Body of pancreas (tissue), 4 donors: ENCODE measurements at regions of chr5 and their contacts with region 1.

Region 1: GRCh38 chr5:10621832-10622231 is 58.0 kb downstream of the ANKRD33B start:
- DNase-seq: no peak
- ATAC-seq: no peak
- H3K4me3 ChIP-seq: no peak overlapping the region
- H3K27ac ChIP-seq: no peak overlapping the region
- H3K4me1 ChIP-seq: no peaks in the 10 kb centered on the region
- H3K27me3 ChIP-seq: no peaks in the 10 kb centered on the region
- CTCF ChIP-seq: no peak
- POLR2A ChIP-seq: no peak

Region 2: DNA sequence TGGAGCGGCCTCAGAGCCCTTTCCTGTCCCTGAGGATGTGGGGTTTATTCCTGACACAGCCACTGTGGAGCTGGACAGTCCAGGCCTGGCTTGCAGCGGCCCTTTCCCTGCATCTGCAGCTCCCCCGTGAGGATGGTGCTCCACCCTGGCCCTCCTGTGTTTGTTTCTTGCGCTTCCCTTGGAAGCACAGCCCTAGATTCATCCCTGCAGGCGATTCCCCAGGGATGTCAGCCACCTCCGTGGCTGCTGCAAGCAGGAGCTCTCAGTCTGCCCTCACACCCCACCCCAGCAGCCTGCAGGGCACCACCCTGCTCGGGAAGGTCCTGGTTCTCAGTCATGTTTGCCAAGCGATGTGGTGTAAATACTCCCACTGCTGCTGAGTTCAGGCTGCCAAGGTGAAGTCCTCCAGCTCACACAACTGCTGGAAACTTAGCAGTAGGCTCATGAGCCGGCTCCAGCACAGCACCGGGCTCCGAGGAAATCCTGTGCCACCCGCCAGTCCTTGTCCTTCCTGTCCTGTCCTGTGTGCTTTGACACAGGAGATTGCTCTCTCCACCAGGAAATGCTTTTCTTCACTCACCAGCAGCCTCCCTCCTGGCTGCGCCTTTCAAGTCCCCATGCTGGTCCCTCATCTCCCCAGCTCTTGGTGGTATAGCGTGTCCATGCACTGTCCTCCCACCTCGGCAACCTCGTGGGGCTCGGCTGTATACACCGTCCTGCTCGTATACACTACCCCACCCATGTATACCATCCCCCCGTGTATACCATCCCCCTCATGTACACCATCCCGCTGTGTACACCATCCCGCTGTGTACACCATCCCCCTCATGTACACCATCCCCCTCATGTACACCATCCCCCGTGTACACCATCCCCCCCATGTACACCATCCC is 163.9 kb before region 1 on chr5:
- intact Hi-C with region 1: loop called (anchors 5 kb)
- DNase-seq: no peak
- ATAC-seq: no peak
- H3K4me3 ChIP-seq: no peak overlapping the region
- H3K27ac ChIP-seq: no peak overlapping the region
- H3K4me1 ChIP-seq: peaks cover 12% of the 10 kb centered on the region
- H3K27me3 ChIP-seq: no peaks in the 10 kb centered on the region
- CTCF ChIP-seq: no peak
- POLR2A ChIP-seq: no peak